ENCODE measurements at regions of chrX and their contacts with region 1.

Region 1: DNA sequence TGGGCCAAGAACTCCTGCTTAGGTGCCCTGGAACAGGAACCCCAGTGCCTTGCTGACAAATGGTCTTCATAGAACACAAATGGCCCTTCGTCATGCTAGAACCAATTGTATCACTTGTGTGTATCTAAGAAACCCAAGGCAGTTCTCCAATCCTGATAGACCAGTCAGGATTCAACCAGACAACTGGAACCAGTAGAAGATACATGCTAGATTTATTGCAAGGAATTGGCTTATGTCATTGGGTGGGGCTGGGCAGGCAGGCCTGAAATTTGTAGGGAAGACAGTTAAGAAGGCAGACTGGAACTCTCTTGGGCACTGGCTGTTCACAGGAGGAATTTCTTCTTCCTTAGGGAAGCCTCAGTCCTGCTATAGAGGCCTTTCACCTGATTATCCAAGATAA is 17.0 kb upstream of the TBL1X start:
- DNase-seq: no peak
- ATAC-seq: no peak
- H3K4me3 ChIP-seq: no peak overlapping the region
- H3K27ac ChIP-seq: no peak overlapping the region
- H3K4me1 ChIP-seq: no peaks in the 10 kb centered on the region
- H3K27me3 ChIP-seq: no peaks in the 10 kb centered on the region
- CTCF ChIP-seq: no peak

Region 2: GRCh38 chrX:9318213-9318612 is 129.7 kb before region 1 on chrX:
- CTCF ChIA-PET with region 1: no interaction called
- POLR2A ChIA-PET with region 1: interaction called, 13 read pairs
- in situ Hi-C with region 1: no loop called
- intact Hi-C with region 1: no loop called
- DNase-seq: no peak
- ATAC-seq: no peak
- H3K4me3 ChIP-seq: no peak overlapping the region
- H3K27ac ChIP-seq: no peak overlapping the region
- H3K4me1 ChIP-seq: no peaks in the 10 kb centered on the region
- H3K27me3 ChIP-seq: no peaks in the 10 kb centered on the region
- CTCF ChIP-seq: no peak

Region 3: DNA sequence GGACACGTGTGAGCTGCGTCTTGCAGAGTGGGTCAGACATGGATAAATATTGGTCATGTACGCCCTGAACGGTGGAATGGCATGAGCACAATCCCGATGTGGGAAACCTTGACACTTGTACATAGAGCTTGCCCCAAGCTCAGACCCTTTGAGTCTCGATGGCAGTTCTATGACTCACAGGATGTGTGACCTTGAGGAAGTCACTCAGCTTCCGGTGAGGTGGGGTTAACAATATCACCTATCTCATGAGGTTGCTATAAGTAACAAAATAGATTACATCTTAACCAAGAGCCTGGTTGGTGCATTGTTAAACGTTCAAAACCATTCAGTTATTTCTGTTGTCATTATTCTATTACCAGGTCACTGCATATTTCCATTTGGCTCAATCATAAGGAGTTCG is 92.2 kb before region 1 on chrX:
- CTCF ChIA-PET with region 1: no interaction called
- POLR2A ChIA-PET with region 1: no interaction called
- in situ Hi-C with region 1: no loop called
- intact Hi-C with region 1: no loop called
- DNase-seq: no peak
- ATAC-seq: no peak
- H3K4me3 ChIP-seq: no peak overlapping the region
- H3K27ac ChIP-seq: no peak overlapping the region
- H3K4me1 ChIP-seq: no peaks in the 10 kb centered on the region
- H3K27me3 ChIP-seq: no peaks in the 10 kb centered on the region
- CTCF ChIP-seq: no peak